Activated T-helper 1 cell treated with anti-CD3 and anti-CD28 coated beads, Interleukin-12 subunit alpha, Interleukin-12 subunit beta, Interleukin-2, Interleukin-4 antibody, amounts not matched to agents 30 ng/mL and 10 ng/mL and 1 ng/mL, durations not matched to agents 14 hours and 24 hours and 36 hours (primary cell): ENCODE measurements at regions of chr19 and their contacts with region 1.

Region 1: DNA sequence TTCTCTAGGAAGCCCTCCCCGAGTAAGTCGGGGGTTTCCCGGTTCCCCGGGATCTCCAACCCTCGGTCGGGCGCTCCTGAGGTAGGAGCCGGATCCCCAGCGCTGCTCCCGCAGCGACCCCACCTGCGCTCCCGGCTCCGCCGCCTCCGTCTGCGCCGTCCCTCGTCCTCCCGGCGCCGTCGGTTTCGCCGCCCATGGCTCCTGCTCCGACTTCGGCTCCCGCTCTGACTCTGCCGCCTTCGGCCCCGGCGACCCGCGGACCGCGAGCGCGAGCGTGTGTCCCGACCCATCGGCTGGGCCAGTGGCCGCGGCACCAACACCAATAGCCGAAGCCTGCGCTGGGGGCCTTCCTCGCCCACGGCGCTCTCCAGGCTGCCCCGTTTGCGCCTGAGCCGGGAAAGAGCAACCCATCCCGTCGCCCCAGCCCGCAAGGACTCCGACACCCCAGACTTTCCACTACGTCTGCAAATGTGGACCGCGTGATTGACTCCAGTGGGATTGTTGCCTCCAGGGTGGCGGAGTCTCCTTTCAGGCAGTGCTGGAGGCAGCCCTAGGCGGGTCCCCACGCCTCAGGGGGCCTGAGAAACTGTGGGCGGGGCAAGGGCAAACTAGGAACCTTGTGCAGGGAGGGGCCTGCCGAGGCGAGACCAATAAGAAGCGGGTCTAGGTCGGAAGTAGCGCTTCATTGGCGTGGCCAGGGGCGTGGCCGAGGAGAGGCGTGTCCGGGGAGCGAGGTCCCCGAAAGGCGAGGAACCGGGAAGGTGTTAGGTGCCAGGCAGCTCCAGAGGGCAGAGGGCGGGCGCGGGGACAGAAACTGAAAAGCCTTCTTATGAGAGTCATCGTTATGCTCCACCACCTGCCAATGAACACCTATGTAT is at the start of gene CACTIN:
- DNase-seq: peak; percentile 98
- H3K4me3 Mint-ChIP-seq: peak within 1 kb of the TSS; percentile 89
- H3K27ac Mint-ChIP-seq: peak within 1 kb of the TSS; percentile 97
- H3K4me1 Mint-ChIP-seq: peaks cover 13% of the 10 kb centered on the region
- H3K27me3 Mint-ChIP-seq: no peaks in the 10 kb centered on the region
- total RNA-seq, gene CACTIN: 37.2 and 40.8 TPM in 2 replicates

Region 2: GRCh38 chr19:3185482-3186376 is 441.0 kb before region 1 on chr19 and contains the start of gene NCLN:
- intact Hi-C with region 1: loop called (anchors 2 kb)
- DNase-seq: peak; percentile 91
- H3K4me3 Mint-ChIP-seq: peak within 1 kb of the TSS; percentile 93
- H3K27ac Mint-ChIP-seq: peak within 1 kb of the TSS; percentile 90
- H3K4me1 Mint-ChIP-seq: peaks cover 45% of the 10 kb centered on the region
- H3K27me3 Mint-ChIP-seq: no peaks in the 10 kb centered on the region
- total RNA-seq, gene NCLN: 112 and 118 TPM in 2 replicates

Region 3: DNA sequence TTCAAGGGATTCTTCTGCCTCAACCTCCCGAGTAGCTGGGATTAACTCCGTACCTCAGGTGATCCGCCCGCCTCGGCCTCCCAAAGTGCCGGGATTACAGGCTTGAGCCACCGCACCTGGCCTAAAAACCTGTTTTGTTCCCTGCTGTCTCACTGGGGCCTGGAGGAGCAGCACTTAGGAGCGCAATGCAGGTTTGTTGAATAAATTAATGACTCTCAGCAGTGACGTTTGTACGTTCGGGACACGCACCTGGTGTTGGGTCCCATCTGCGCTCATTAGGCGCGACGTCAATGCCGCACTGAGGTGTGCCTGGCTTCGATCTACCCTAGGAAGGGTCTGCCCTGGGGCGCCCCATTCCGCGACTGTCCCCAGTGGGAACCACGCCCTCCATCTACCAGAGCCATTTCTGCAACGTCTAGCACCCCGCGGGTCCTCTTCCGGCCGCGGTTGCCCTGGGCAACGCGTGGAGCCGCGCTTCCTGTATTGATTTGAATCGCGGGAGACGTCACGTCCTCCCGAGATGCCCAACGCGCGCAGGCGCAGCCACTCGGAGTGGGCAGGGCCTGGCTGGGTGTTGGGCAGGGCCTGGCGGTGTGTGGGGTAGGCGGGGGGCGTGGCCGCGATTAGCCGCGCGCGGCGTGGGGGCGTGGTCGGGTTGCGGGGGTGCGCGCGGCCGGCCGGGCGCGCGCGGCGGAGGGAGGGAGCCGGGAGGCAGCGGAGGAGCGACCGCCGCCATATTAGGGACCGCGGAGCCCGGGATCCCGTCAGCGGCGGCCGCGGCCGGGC is 120.9 kb before region 1 on chr19 and contains the start of gene FZR1:
- intact Hi-C with region 1: loop called (anchors 1 kb)
- DNase-seq: peak; percentile 100
- H3K4me3 Mint-ChIP-seq: peak within 1 kb of the TSS; percentile 93
- H3K27ac Mint-ChIP-seq: peak within 1 kb of the TSS; percentile 97
- H3K4me1 Mint-ChIP-seq: peaks cover 43% of the 10 kb centered on the region
- H3K27me3 Mint-ChIP-seq: no peaks in the 10 kb centered on the region
- total RNA-seq, gene FZR1: 41.1 and 45.3 TPM in 2 replicates

Region 4: GRCh38 chr19:3557461-3558248 is 69.1 kb before region 1 on chr19 and contains the start of gene MFSD12:
- intact Hi-C with region 1: loop called (anchors 1 kb)
- DNase-seq: peak; percentile 96
- H3K4me3 Mint-ChIP-seq: peak within 1 kb of the TSS; percentile 96
- H3K27ac Mint-ChIP-seq: peak within 1 kb of the TSS; percentile 84
- H3K4me1 Mint-ChIP-seq: peaks cover 32% of the 10 kb centered on the region
- H3K27me3 Mint-ChIP-seq: no peaks in the 10 kb centered on the region
- total RNA-seq, gene MFSD12: 126 and 136 TPM in 2 replicates

Region 5: DNA sequence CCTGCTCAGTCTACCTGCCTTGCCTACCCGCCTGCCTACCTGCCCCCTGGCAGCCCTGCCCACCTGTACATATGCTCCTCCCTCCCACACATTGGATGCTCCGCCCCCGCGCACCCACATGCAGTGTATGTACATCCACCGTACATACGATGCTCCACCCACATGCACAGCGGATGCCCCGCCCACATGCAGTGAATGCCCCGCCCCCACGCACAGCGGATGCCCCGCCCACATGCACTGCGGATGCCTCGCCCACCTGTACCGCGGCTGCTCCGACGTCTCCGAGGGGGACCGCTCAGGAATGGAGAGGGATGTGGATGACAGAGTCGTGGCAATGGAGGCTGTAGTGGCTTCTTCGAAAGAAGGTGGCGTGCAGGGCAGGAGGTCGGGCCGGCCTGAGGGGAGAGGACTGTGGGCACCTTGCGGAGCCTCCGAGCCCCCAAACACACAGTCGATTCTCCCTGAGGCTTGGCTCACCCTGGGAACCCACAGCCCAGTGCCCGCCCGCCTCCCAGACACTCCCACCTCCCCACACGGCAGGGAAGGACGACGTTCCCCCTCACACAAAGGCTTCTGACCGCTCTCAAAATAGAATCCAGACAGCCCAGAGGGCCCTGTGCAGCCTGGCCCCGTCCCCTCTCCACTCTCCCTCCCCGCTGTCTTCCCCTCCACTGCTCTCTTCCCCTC is 16.4 kb after region 1 on chr19:
- intact Hi-C with region 1: no loop called
- DNase-seq: peak; percentile 8
- H3K4me3 Mint-ChIP-seq: no peak overlapping the region
- H3K27ac Mint-ChIP-seq: no peak overlapping the region
- H3K4me1 Mint-ChIP-seq: no peaks in the 10 kb centered on the region
- H3K27me3 Mint-ChIP-seq: no peaks in the 10 kb centered on the region

Region 6: GRCh38 chr19:3670796-3671679 is 44.3 kb after region 1 on chr19:
- intact Hi-C with region 1: no loop called
- DNase-seq: no peak
- H3K4me3 Mint-ChIP-seq: no peak overlapping the region
- H3K27ac Mint-ChIP-seq: peak overlapping the region; percentile 63
- H3K4me1 Mint-ChIP-seq: no peaks in the 10 kb centered on the region
- H3K27me3 Mint-ChIP-seq: no peaks in the 10 kb centered on the region

Region 7: GRCh38 chr19:3687774-3688706 is 61.3 kb after region 1 on chr19:
- intact Hi-C with region 1: no loop called
- DNase-seq: no peak
- H3K4me3 Mint-ChIP-seq: peak overlapping the region; percentile 58
- H3K27ac Mint-ChIP-seq: no peak overlapping the region
- H3K4me1 Mint-ChIP-seq: peaks cover 31% of the 10 kb centered on the region
- H3K27me3 Mint-ChIP-seq: no peaks in the 10 kb centered on the region

Region 8: DNA sequence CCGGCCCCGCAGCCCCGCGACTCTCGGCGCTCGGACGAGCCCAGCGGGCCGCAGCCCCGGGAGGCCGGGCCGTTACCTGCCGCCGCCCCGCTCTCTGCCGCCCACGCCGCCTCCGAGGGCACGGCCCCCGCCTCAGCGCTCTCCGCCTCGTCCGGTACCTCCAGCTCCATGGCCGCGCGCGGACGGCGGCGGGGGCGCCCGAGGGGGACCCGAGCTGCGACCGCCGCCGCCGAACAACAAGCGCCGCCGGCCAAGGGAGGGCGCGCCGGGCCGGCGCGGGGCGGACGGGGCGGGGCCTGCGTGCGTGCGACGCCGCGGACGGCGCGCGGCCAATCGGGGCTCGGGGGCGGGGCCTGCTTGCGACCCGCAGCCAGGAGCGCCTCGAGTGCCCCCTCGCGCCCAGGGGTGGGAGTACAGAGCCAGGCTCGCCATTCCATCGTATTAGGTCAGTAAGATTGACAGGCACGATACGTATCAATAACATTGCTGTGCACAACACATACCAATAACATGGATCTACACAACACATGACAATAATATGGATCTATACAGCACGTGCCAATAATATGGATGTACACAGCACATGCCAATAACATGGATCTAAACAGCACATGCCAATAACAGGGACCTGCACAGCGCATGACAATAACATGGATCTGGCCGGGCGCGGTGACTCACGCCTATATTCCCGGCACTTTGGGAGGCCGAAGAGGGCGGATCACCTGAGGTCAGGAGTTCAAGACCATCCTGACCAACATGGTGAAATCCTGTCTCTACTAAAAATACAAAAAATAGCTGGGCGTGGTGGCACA is 73.7 kb after region 1 on chr19 and contains the start of gene PIP5K1C:
- intact Hi-C with region 1: loop called (anchors 1 kb)
- DNase-seq: peak; percentile 90
- H3K4me3 Mint-ChIP-seq: peak within 1 kb of the TSS; percentile 91
- H3K27ac Mint-ChIP-seq: peak within 1 kb of the TSS; percentile 70
- H3K4me1 Mint-ChIP-seq: peaks cover 5% of the 10 kb centered on the region
- H3K27me3 Mint-ChIP-seq: no peaks in the 10 kb centered on the region
- total RNA-seq, gene PIP5K1C: 24.5 and 28.0 TPM in 2 replicates

Region 9: GRCh38 chr19:3970808-3971598 is 344.3 kb after region 1 on chr19 and contains the start of gene DAPK3:
- intact Hi-C with region 1: loop called (anchors 5 kb)
- DNase-seq: peak; percentile 93
- H3K4me3 Mint-ChIP-seq: peak within 1 kb of the TSS; percentile 91
- H3K27ac Mint-ChIP-seq: peak within 1 kb of the TSS; percentile 82
- H3K4me1 Mint-ChIP-seq: peaks cover 25% of the 10 kb centered on the region
- H3K27me3 Mint-ChIP-seq: no peaks in the 10 kb centered on the region
- total RNA-seq, gene DAPK3: 47.2 and 47.3 TPM in 2 replicates